PC-9 (cell line): ENCODE measurements at regions of chr17 and their contacts with region 1.

Region 1: GRCh38 chr17:59914274-59914854 is 21.4 kb downstream of the RPS6KB1 start:
- DNase-seq: no peak
- H3K4me3 ChIP-seq: no peak overlapping the region
- H3K27ac ChIP-seq: no peak overlapping the region
- H3K4me1 ChIP-seq: no peaks in the 10 kb centered on the region; the same call in 1 of the 2 replicates
- H3K27me3 ChIP-seq: no peaks in the 10 kb centered on the region
- CTCF ChIP-seq: peak; percentile 87

Region 2: DNA sequence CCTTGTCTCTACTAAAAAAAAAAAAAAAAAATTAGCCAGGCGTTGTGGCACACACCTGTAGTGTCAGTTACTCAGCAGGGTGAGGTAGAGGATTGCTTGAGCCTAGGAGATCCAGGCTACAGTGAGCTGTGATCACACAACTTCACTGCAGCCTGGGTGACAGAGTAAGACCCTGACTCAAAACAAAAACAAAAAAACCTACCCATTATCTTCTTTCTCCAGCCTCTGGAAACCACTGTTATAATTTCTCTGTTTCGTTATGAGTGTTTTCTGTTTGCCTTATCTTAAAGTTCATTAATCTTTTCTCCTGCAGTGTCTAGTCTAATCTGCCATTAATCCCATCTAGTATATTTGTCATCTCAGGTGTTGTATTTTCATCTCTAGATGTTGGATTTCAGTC is 313.2 kb before region 1 on chr17:
- CTCF ChIA-PET with region 1: interaction called, 12 read pairs
- POLR2A ChIA-PET with region 1: no interaction called
- intact Hi-C with region 1: no loop called
- DNase-seq: no peak
- H3K4me3 ChIP-seq: no peak overlapping the region
- H3K27ac ChIP-seq: no peak overlapping the region
- H3K4me1 ChIP-seq: no peaks in the 10 kb centered on the region
- H3K27me3 ChIP-seq: no peaks in the 10 kb centered on the region
- CTCF ChIP-seq: no peak

Region 3: GRCh38 chr17:59676716-59677115 is 237.6 kb before region 1 on chr17:
- CTCF ChIA-PET with region 1: interaction called, 12 read pairs
- POLR2A ChIA-PET with region 1: no interaction called
- intact Hi-C with region 1: no loop called
- DNase-seq: no peak
- H3K4me3 ChIP-seq: no peak overlapping the region
- H3K27ac ChIP-seq: no peak overlapping the region
- H3K4me1 ChIP-seq: no peaks in the 10 kb centered on the region
- H3K27me3 ChIP-seq: no peaks in the 10 kb centered on the region
- CTCF ChIP-seq: no peak

Region 4: GRCh38 chr17:59725691-59726090 is 188.7 kb before region 1 on chr17:
- CTCF ChIA-PET with region 1: no interaction called
- POLR2A ChIA-PET with region 1: interaction called, 12 read pairs
- intact Hi-C with region 1: no loop called
- DNase-seq: peak in 1 of 2 experiments; percentile 49
- H3K4me3 ChIP-seq: no peak overlapping the region
- H3K27ac ChIP-seq: peak overlapping the region; percentile 36
- H3K4me1 ChIP-seq: peaks cover 20% of the 10 kb centered on the region
- H3K27me3 ChIP-seq: no peaks in the 10 kb centered on the region
- CTCF ChIP-seq: no peak

Region 5: GRCh38 chr17:59964482-59965328 is 50.3 kb after region 1 on chr17 and contains the start of gene RNFT1:
- CTCF ChIA-PET with region 1: no interaction called
- POLR2A ChIA-PET with region 1: no interaction called
- intact Hi-C with region 1: no loop called
- DNase-seq: peak; percentile 77 to 83
- H3K4me3 ChIP-seq: peak within 1 kb of the TSS; percentile 82
- H3K27ac ChIP-seq: peak within 1 kb of the TSS; percentile 71
- H3K4me1 ChIP-seq: peaks cover 19% of the 10 kb centered on the region
- H3K27me3 ChIP-seq: no peaks in the 10 kb centered on the region
- CTCF ChIP-seq: no peak
- total RNA-seq, gene RNFT1: 19.9 and 24.7 TPM in 2 replicates

Region 6: DNA sequence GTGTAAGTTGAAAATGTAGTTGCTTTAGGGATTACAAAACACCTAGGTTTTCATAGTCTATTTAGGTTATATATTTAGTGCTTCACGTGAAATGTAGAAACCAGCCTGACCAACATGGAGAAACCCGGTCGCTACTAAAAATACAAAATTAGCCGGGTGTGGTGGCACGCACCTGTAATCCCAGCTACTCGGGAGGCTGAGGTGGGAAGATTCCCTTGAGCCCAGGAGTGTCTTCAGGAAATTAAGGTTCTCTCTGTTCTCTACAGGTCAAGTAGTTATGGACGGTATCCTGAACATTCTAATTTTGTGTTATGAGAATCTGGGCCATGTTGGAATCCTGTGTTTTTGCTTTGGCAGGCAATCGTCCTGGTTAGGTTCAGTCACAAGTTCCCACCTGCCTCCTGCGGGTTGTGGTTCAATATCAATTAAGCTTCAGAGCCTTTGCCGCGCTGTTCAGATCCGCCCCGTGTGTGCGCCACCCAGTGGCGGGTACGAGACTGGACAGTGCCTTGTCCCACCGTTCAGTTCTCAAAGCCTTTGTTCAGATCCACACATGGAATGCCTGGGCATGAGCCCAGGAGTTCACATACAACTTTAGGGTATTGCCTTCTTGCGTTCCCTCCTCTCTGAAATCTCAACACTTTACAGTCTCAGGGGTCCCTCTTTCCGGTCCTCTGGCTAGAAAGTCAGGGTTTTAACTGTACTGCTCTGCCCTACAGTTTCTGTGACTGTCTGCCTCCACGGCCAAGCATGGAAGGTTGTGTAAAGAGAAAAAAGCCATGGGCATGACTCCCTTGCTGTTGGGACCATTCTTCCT is 122.6 kb after region 1 on chr17:
- CTCF ChIA-PET with region 1: interaction called, 8 read pairs
- POLR2A ChIA-PET with region 1: no interaction called
- intact Hi-C with region 1: loop called (anchors 10 kb)
- DNase-seq: peak; percentile 71 to 72
- H3K4me3 ChIP-seq: no peak overlapping the region
- H3K27ac ChIP-seq: no peak overlapping the region
- H3K4me1 ChIP-seq: no peaks in the 10 kb centered on the region
- H3K27me3 ChIP-seq: no peaks in the 10 kb centered on the region
- CTCF ChIP-seq: peak; percentile 93